Heart right ventricle (tissue), 16 donors: ENCODE measurements at regions of chr1 and their contacts with region 1.

Region 1: GRCh38 chr1:13748610-13749505 is 48.9 kb downstream of the PRDM2 start:
- DNase-seq: peak; percentile 96 to 98
- ATAC-seq: peak; percentile 97 to 99 (median 98)
- H3K4me3 ChIP-seq: peak overlapping the region; percentile 64 to 96 (median 90)
- H3K27ac ChIP-seq: peak overlapping the region; percentile 64 to 98 (median 94)
- H3K4me1 ChIP-seq: peaks cover 0 to 50% (median 40%) of the 10 kb centered on the region in 9 donors
- H3K27me3 ChIP-seq: no peaks in the 10 kb centered on the region
- CTCF ChIP-seq: peak in 4 of 9 donors; percentile 20 to 47 (median 36)

Region 2: DNA sequence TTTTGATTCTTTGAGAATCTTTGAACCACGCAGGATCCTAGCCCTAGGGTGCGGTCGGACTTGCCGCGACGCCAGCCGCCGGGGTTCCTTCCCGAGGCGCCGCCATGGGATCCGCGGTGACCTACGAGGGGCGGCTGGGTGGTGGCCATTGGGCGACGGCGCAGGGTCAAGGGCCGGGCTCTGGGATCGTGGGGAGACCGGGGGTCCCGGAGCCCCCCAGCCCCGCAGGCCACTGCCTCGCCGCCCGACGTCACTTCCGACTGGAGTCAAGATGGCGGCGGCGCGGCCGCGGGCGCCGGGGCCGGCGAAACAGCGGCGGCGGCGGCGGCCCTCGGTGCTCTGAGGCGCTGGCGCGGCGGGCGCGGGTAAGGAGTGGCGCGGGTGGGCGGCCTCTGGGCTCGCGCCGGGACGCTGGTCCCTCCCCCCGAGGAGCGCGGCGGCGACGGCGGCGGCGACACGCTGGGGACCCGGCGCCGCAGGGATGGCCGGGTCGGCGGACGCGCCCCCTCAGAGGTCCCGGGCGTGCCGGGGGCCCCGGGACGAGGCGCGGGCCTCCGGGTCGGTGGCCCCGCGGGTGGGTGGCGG is 48.8 kb before region 1 on chr1 and contains the start of gene PRDM2:
- intact Hi-C with region 1: loop called in 3 of 10 experiments (anchors 2 to 10 kb)
- DNase-seq: peak; percentile 44 to 61
- ATAC-seq: peak; percentile 41 to 87 (median 74)
- H3K4me3 ChIP-seq: peak within 1 kb of the TSS; percentile 55 to 88 (median 73)
- H3K27ac ChIP-seq: peak within 1 kb of the TSS; percentile 65 to 96 (median 90)
- H3K4me1 ChIP-seq: peaks cover 0 to 30% (median 6%) of the 10 kb centered on the region in 9 donors
- H3K27me3 ChIP-seq: peaks cover 0 to 19% (median 4%) of the 10 kb centered on the region in 7 donors
- CTCF ChIP-seq: no peak
- total RNA-seq, gene PRDM2: 37.5 to 57.3 (median 43.1) TPM

Region 3: GRCh38 chr1:13807213-13807612 is 58.4 kb after region 1 on chr1:
- intact Hi-C with region 1: loop called in 1 of 10 experiments (anchors 5 kb)
- DNase-seq: no peak
- ATAC-seq: no peak
- H3K4me3 ChIP-seq: no peak overlapping the region
- H3K27ac ChIP-seq: no peak overlapping the region
- H3K4me1 ChIP-seq: peaks cover 0 to 13% (median 5%) of the 10 kb centered on the region in 9 donors
- H3K27me3 ChIP-seq: no peaks in the 10 kb centered on the region
- CTCF ChIP-seq: peak in 6 of 9 donors; percentile 14 to 28 (median 18)